ENCODE measurements at regions of chr7 and their contacts with region 1.

Region 1: DNA sequence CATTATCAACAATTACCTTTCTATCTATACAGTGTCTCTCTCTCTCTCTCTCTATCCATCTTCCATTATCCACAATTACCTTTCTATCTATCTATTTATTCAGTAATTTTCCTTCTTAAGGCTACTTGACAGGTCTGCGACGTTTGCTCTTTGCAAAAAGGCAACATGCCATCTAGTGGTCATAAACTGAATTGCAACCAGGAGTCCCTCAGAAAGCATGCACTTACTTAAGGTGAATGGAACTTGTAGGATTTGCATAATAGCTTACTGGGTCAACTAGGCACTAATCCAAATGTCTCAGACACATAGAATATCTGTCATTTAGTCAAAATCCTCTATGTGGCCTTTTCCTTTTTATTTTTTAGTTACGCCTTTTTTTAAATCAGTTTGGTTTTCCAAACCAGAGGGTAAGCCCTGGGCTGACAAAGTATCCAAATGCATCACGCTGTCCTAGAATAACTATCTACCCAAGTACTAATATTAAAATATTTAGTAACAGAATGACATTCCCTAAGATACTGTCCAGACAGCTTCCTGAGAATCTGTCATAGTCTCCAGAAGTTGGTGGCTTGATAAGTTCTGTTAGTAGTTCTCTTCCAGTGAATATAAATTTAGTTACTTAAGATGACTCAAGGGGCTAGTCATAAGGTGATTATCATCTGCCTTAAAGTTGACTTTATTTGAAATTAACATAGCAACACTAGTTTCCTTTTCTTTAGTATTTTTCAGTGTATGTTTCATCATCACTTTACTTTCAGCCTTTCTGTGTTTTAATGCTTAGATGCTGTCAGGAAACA is 208.3 kb downstream of the PPP1R3A start:
- DNase-seq: peak; percentile 46
- CTCF ChIP-seq: peak; percentile 95

Region 2: GRCh38 chr7:113636727-113637421 is 73.6 kb before region 1 on chr7:
- CTCF ChIA-PET with region 1: no interaction called
- POLR2A ChIA-PET with region 1: no interaction called
- DNase-seq: no peak
- CTCF ChIP-seq: no peak

Region 3: DNA sequence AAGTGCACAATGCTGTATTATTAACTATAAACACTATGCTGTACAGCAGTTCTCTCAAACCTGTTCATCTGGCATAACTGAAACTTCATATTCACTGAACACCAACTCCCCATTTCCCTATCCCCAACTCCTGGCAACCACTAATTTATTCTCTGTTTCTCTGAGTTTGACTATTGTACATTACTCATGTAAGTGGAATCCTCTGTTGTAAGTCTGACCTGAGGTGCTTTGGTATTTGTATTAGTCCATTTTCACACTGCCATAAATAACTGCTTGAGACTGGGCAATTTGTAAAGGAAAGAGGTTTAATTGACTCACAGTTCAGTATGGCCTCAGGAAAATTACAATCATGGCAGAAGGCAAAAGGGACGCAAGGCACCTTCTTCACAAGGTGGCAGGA is 58.0 kb before region 1 on chr7:
- CTCF ChIA-PET with region 1: no interaction called
- POLR2A ChIA-PET with region 1: no interaction called
- DNase-seq: no peak
- CTCF ChIP-seq: no peak

Region 4: GRCh38 chr7:113684165-113684564 is 26.3 kb before region 1 on chr7:
- CTCF ChIA-PET with region 1: interaction called, 11 read pairs
- POLR2A ChIA-PET with region 1: no interaction called
- DNase-seq: no peak
- CTCF ChIP-seq: no peak

Region 5: GRCh38 chr7:113698556-113699220 is 11.8 kb before region 1 on chr7:
- CTCF ChIA-PET with region 1: interaction called, 18 read pairs
- POLR2A ChIA-PET with region 1: no interaction called
- DNase-seq: no peak
- CTCF ChIP-seq: peak; percentile 64

Region 6: DNA sequence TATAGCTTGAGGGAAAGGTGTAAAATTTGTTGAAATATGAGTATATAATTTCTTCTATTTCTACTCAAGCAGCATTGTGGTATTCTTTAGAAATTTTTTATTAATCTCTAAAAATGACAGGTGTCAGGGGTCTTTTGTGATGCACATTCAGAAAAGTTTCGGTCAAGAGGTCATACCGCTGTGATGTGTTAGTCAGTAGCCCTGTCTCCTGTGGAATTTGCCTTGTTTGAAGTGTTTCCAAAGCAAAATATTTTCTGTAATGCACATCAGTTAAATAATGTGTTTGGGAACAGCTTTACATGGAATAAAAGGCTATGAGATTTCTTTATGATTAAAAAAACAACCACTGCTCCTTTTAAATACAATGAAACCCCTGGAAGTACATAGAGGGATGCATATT is 739.9 kb after region 1 on chr7:
- CTCF ChIA-PET with region 1: no interaction called
- POLR2A ChIA-PET with region 1: no interaction called
- DNase-seq: no peak
- CTCF ChIP-seq: no peak

Measured in GM10248 (cell line).